T-cell (primary cell): ENCODE measurements at regions of chr1 and their contacts with region 1.

Region 1: GRCh38 chr1:77744576-77744975 is 15.1 kb downstream of the USP33 start:
- DNase-seq: no peak
- ATAC-seq: no peak
- H3K4me3 ChIP-seq: no peak overlapping the region
- H3K4me3 Mint-ChIP-seq: no peak overlapping the region
- H3K27ac ChIP-seq: no peak overlapping the region
- H3K27ac Mint-ChIP-seq: no peak overlapping the region
- H3K4me1 ChIP-seq: peaks cover 0 to 7% of the 10 kb centered on the region in 2 experiments
- H3K4me1 Mint-ChIP-seq: peaks cover 53 to 68% (median 61%) of the 10 kb centered on the region in 3 donors
- H3K27me3 ChIP-seq: no peaks in the 10 kb centered on the region
- H3K27me3 Mint-ChIP-seq: no peaks in the 10 kb centered on the region

Region 2: DNA sequence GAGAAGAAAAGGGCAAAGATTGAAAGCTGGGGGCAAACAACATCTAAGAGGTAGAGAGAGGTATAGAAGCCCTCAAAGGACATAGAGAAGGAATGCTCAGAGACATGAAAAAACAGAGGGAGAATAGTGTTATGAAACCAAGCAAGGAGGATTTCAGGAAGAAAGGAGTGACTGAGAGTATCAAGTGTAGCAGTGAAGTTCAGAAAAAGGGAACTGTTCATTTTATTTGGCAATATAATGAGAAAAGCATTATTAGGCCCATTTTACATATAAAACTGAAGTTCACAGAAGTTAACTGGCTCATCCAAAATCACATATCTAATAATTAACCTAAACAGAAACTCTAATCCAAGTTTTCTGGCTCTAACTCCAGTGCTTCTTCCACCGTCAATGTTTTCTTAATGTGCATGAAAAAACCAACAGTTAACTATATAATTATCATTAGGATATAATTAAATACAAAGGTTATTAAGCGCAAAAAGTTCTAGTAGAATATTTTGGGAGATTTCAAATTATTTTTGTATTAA is 161.5 kb after region 1 on chr1:
- CTCF ChIA-PET with region 1: interaction called in 1 of 2 experiments, 13 read pairs
- POLR2A ChIA-PET with region 1: no interaction called
- DNase-seq: no peak
- ATAC-seq: no peak
- H3K4me3 ChIP-seq: no peak overlapping the region
- H3K4me3 Mint-ChIP-seq: no peak overlapping the region
- H3K27ac ChIP-seq: no peak overlapping the region
- H3K27ac Mint-ChIP-seq: no peak overlapping the region
- H3K4me1 ChIP-seq: no peaks in the 10 kb centered on the region
- H3K4me1 Mint-ChIP-seq: no peaks in the 10 kb centered on the region
- H3K27me3 ChIP-seq: no peaks in the 10 kb centered on the region
- H3K27me3 Mint-ChIP-seq: peaks cover 0 to 2% of the 10 kb centered on the region in 2 donors